ENCODE measurements at regions of chrX and their contacts with region 1.

Region 1: GRCh38 chrX:41781502-41781901 is 57.5 kb downstream of the GPR82 start:
- DNase-seq: peak; percentile 49
- CTCF ChIP-seq: peak; percentile 61

Region 2: DNA sequence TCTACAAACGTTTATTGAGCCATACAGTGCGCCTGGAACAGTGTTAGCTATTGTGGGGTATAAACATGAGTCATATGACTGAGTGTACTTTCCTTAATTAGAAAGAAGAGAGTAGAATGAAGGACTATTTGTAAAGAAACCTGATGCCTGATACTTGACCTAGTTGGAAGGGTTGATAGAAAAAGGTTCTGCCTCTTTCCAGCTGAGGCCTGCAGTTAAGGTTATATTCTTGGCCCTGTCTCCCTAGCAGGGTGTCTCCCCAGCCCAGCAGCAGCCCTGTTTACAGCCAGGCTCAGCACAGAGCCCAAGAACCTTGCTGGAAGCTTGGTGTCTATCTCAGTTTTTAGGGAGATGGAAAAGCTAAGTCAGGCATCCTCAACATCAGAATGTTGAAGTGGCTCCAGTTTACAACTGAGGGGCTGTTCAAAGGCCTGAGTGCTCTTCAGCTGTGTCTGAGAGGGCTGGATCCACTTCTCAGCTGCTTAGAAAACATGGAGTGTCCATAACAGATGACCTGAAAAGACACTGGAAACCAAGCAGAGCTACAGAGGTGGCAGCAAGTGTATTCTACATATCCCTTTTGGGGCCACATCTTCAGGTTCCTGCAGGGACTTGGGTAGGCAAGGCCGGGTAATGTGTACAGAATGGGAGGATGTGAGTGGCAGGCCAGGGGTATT is 312.7 kb before region 1 on chrX:
- in situ Hi-C with region 1: no loop called
- DNase-seq: no peak
- CTCF ChIP-seq: no peak

Region 3: DNA sequence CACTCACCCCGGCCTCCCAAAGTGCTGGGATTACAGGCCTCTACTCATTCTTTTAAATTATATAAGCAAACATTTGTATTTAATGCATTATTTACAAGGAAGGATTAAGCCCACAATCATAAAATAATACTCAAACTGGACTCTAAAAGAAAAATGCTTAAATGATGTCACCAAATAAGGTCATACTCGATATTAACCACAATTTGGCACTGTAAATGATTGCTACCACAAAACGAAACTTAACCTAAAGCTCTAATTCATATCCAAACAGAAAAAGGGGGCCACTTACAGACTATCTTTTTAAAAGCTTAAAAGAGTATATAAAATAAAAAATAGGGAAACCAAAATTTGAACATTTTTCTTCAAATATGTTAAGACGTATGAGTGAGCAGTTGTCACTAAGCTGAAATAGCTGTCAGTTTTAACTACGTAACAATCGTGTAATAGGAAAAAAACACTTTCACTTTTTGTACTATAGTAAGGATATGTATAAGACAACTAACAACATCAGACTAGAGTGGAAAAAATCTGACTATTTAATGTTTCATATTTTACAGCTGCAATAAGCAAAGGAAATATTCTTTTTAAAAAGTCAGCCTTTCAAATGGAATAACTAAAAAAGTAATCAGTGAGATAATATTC is 201.0 kb before region 1 on chrX:
- in situ Hi-C with region 1: no loop called
- DNase-seq: peak; percentile 18
- CTCF ChIP-seq: no peak

Region 4: GRCh38 chrX:41970419-41971065 is 189.0 kb after region 1 on chrX:
- in situ Hi-C with region 1: no loop called
- DNase-seq: no peak
- CTCF ChIP-seq: no peak

Region 5: DNA sequence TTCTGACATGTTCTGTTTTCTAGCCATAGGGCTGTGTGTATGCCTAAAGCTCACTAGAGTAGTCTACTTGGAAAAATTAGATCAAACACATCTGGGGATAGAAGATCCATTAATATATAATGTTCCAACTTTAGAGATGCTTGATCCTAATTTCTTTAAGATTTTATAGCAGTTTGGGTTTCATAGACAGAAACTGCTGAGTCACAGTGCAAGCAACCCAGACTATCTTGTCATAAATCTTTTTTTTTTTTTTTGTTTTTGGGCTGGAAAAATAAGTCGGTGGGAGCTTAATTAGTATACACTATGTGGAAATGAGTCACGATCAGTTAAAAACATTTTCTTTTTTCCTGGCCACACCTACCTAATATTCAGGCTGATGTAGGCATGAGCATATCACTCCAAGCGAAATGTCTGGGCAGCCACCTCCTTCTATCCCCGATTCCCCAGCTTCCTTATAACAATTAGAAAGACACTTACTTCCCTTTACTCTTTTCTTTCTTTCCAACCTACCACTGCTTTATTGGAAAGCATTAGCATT is 200.0 kb after region 1 on chrX:
- in situ Hi-C with region 1: no loop called
- DNase-seq: no peak
- CTCF ChIP-seq: no peak

Region 6: GRCh38 chrX:43349363-43349762 is 1567.9 kb after region 1 on chrX:
- in situ Hi-C with region 1: loop called (anchors 25 kb)
- DNase-seq: peak; percentile 9
- CTCF ChIP-seq: peak; percentile 63

Region 7: GRCh38 chrX:43557792-43558191 is 1776.3 kb after region 1 on chrX:
- in situ Hi-C with region 1: loop called (anchors 25 kb)
- DNase-seq: peak; percentile 39
- CTCF ChIP-seq: peak; percentile 64

Region 8: DNA sequence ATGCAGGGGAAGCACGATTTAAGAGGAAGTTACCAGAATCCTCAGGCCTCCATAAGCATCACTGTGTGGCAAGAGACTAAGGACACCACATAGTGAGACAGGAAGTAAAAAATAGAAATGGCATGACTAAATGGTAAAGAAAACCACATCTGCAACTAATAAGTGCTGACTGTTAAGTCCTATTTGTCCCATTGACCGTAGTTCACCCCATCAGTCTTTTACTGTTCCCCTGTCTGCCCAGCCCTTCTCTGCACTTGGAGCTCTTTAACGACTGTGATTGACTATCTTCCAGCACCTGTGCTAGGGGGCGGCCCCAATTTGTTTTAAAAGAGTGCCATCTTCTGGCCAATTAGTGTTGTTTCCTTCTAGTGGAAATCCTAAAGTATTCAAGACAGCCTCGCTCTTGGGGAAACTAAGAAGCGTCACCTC is 1968.8 kb after region 1 on chrX:
- in situ Hi-C with region 1: loop called (anchors 25 kb)
- DNase-seq: peak; percentile 37
- CTCF ChIP-seq: peak; percentile 39